ENCODE measurements at regions of chr4 and their contacts with region 1.

Region 1: DNA sequence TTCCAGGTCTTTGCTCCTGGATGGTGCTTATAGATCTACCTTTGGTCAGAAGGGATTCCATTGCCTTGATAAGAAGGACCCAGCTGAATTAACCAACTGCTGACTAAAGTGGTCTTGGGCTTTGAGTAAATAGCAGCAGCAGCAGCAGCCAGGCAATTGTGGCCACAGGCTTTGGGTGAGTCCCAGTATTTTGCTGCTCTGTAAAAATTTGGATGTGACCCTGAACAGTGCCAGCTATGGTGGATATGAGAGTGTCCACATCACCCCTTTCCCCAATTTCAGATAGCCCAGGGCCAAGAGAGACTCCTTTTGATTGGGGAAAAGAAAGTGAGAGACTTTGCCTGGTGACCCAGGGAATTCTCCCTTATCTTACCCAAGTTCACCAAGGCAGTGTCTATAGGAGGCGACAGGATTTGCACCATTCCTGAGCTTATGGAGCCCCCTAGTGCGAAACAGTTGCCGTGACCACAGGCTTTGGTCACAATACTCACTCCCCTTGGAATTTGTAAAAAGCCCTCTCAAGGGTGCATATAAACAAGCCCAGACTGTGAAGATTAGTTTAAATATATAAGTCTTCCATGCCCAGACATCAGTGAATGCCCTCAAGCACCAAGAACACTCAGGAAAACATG is 518.0 kb downstream of the TMA16 start:
- DNase-seq: peak; percentile 66
- H3K4me3 Mint-ChIP-seq: no peak overlapping the region
- H3K27ac Mint-ChIP-seq: no peak overlapping the region
- H3K4me1 Mint-ChIP-seq: no peaks in the 10 kb centered on the region
- H3K27me3 Mint-ChIP-seq: no peaks in the 10 kb centered on the region
- CTCF ChIP-seq: peak; percentile 55

Region 2: DNA sequence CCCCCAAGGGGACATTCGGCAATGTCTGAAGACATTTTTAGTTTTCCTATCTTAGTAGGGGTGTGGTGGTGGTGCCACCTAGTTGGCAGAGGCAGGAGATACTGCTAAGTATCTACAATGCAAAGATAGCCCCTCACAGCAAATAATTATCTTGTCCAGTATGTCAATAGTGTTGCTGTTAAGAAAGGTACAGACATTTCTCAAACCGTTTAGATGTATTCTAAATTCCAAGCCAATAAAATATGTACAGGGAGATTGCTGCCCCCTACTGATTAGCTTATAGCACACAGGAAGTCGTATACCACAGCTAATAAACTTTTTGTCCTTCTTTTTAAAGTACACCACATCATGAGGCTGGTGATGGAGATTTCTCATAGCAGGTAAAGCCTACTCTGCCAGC is 257.5 kb before region 1 on chr4:
- CTCF ChIA-PET with region 1: interaction called, 3 read pairs
- POLR2A ChIA-PET with region 1: no interaction called
- intact Hi-C with region 1: loop called (anchors 5 kb)
- DNase-seq: peak; percentile 49
- H3K4me3 Mint-ChIP-seq: no peak overlapping the region
- H3K27ac Mint-ChIP-seq: no peak overlapping the region
- H3K4me1 Mint-ChIP-seq: no peaks in the 10 kb centered on the region
- H3K27me3 Mint-ChIP-seq: no peaks in the 10 kb centered on the region
- CTCF ChIP-seq: peak; percentile 38

Region 3: DNA sequence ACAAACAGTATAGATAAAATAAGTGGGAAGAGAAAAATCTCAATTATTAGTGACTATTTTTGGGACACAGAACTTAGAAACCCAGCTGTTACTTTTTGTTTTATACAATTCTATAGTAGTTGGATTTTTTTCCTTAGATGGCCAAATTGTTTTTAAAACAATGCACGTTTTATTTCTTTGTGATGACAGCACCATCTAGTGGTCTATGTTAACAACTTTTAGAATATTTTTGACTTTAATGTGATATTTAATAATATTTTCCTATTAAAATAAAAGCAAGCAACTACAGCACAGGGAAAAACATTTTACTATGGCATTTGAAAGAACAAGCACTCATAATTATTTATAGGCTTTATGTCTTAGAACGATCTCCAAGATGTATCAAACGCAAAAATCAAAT is 735.9 kb after region 1 on chr4:
- CTCF ChIA-PET with region 1: interaction called, 5 read pairs
- POLR2A ChIA-PET with region 1: no interaction called
- intact Hi-C with region 1: loop called (anchors 2 kb)
- DNase-seq: peak; percentile 39
- H3K4me3 Mint-ChIP-seq: no peak overlapping the region
- H3K27ac Mint-ChIP-seq: no peak overlapping the region
- H3K4me1 Mint-ChIP-seq: peaks cover 6% of the 10 kb centered on the region
- H3K27me3 Mint-ChIP-seq: no peaks in the 10 kb centered on the region
- CTCF ChIP-seq: peak; percentile 41

Measured in MCF 10A (cell line).